ENCODE measurements at regions of chr4 and their contacts with region 1.

Region 1: DNA sequence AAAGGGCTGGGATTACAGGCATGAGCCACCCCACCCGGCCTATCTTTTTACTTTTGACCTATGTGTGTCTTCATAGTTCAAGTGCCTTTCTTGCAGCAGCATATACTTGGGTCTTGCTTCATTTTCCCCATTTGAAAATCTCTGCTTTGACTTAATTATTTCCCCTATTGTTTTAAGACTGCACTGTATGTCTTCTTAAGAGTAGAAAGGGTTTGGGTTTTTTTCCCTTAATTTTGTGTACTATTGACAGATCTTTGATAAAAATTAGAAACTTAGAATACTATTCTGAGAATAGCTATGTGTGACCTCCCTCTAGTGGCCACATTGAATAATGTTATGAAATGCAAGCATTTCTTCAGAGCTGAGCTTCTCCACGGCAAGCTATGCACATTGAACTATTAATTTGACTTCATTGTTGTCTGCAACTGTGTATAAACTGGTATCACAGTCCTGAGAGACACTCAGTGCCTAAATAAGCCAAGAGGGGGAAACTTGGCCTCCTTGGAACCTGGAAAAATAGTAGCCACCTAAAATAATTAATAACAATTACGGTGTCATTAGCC is 8.7 kb upstream of the SLC25A4 start:
- DNase-seq: peak in 4 of 5 donors; percentile 36 to 45 (median 44)
- H3K4me3 ChIP-seq: no peak overlapping the region
- H3K4me3 Mint-ChIP-seq: no peak overlapping the region
- H3K27ac ChIP-seq: no peak overlapping the region
- H3K27ac Mint-ChIP-seq: peak overlapping the region in 1 of 7 donors; percentile 84
- H3K4me1 ChIP-seq: no peaks in the 10 kb centered on the region
- H3K4me1 Mint-ChIP-seq: peaks cover 0 to 4% (median 0%) of the 10 kb centered on the region in 4 donors
- H3K27me3 ChIP-seq: no peaks in the 10 kb centered on the region
- H3K27me3 Mint-ChIP-seq: peaks cover 13 to 19% of the 10 kb centered on the region in 2 donors

Region 2: GRCh38 chr4:185005216-185005819 is 129.1 kb before region 1 on chr4:
- CTCF ChIA-PET with region 1: interaction called, 3 read pairs
- POLR2A ChIA-PET with region 1: no interaction called
- intact Hi-C with region 1: loop called (anchors 1 kb)
- DNase-seq: peak; percentile 62 to 67 (median 64)
- H3K4me3 ChIP-seq: no peak overlapping the region
- H3K4me3 Mint-ChIP-seq: peak overlapping the region; percentile 30 to 72 (median 60)
- H3K27ac ChIP-seq: no peak overlapping the region
- H3K27ac Mint-ChIP-seq: peak overlapping the region in 1 of 7 donors; percentile 6
- H3K4me1 ChIP-seq: peaks cover 7% of the 10 kb centered on the region
- H3K4me1 Mint-ChIP-seq: peaks cover 4 to 12% (median 5%) of the 10 kb centered on the region in 4 donors
- H3K27me3 ChIP-seq: no peaks in the 10 kb centered on the region
- H3K27me3 Mint-ChIP-seq: peaks cover 25 to 42% of the 10 kb centered on the region in 2 donors

Region 3: GRCh38 chr4:185039508-185040273 is 94.7 kb before region 1 on chr4:
- CTCF ChIA-PET with region 1: interaction called, 28 read pairs
- POLR2A ChIA-PET with region 1: no interaction called
- intact Hi-C with region 1: loop called (anchors 1 kb)
- DNase-seq: peak; percentile 46 to 60 (median 56)
- H3K4me3 ChIP-seq: no peak overlapping the region
- H3K4me3 Mint-ChIP-seq: peak overlapping the region in 3 of 8 donors; percentile 1 to 35 (median 33)
- H3K27ac ChIP-seq: no peak overlapping the region
- H3K27ac Mint-ChIP-seq: no peak overlapping the region
- H3K4me1 ChIP-seq: peaks cover 7% of the 10 kb centered on the region
- H3K4me1 Mint-ChIP-seq: peaks cover 4 to 6% (median 4%) of the 10 kb centered on the region in 4 donors
- H3K27me3 ChIP-seq: no peaks in the 10 kb centered on the region
- H3K27me3 Mint-ChIP-seq: peaks cover 9 to 16% of the 10 kb centered on the region in 2 donors

Region 4: GRCh38 chr4:185122681-185123345 is 11.6 kb before region 1 on chr4:
- CTCF ChIA-PET with region 1: interaction called, 15 read pairs
- POLR2A ChIA-PET with region 1: no interaction called
- intact Hi-C with region 1: no loop called
- DNase-seq: no peak
- H3K4me3 ChIP-seq: no peak overlapping the region
- H3K4me3 Mint-ChIP-seq: no peak overlapping the region
- H3K27ac ChIP-seq: no peak overlapping the region
- H3K27ac Mint-ChIP-seq: no peak overlapping the region
- H3K4me1 ChIP-seq: peaks cover 10% of the 10 kb centered on the region
- H3K4me1 Mint-ChIP-seq: peaks cover 6 to 7% (median 6%) of the 10 kb centered on the region in 4 donors
- H3K27me3 ChIP-seq: no peaks in the 10 kb centered on the region
- H3K27me3 Mint-ChIP-seq: peaks cover 15 to 18% of the 10 kb centered on the region in 2 donors

Region 5: DNA sequence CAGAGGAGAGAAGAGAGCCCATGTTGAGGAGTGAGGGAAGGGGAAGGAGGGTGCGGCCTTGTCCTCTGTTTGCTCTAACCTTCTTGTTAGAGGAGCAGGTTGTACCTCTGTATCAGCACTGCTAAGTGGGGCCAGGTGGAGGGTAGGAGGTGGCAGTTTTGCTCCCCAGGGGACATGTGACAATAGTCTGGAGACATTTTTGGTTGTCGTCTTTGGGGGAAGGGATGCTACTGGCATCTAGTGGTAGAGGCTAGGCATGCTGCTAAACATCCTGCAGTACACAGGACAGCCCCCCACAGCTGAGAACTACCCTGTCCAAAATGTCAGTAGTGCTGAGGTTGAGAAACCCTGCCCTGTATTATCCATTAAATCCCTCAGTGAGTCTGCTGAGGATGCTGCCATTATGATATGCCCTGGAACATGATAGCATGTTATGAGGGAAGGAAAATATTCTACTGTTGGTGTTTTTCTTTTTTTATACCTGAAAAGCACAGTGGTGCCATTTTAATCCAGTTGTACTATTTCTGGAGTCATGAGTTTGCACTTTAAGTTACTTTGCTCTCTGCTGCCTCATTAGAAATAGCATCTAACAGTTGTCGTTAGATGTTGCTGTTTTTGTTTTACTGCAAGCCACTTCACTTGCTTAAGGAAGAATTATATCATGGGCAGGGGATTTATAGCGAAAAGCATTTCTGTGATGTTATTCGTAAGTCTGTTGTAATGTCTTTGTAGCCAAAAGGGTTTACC is 170.7 kb after region 1 on chr4:
- CTCF ChIA-PET with region 1: interaction called, 3 read pairs
- POLR2A ChIA-PET with region 1: no interaction called
- intact Hi-C with region 1: loop called (anchors 1 kb)
- DNase-seq: peak; percentile 14 to 51 (median 24)
- H3K4me3 ChIP-seq: no peak overlapping the region
- H3K4me3 Mint-ChIP-seq: no peak overlapping the region
- H3K27ac ChIP-seq: no peak overlapping the region
- H3K27ac Mint-ChIP-seq: peak overlapping the region in 2 of 7 donors; percentile 67 to 71
- H3K4me1 ChIP-seq: no peaks in the 10 kb centered on the region
- H3K4me1 Mint-ChIP-seq: peaks cover 0 to 5% (median 1%) of the 10 kb centered on the region in 4 donors
- H3K27me3 ChIP-seq: no peaks in the 10 kb centered on the region
- H3K27me3 Mint-ChIP-seq: no peaks in the 10 kb centered on the region

Measured in CD4-positive, alpha-beta memory T cell (primary cell).